CD4-positive, alpha-beta T cell (primary cell): ENCODE measurements at regions of chr1 and their contacts with region 1.

Region 1: DNA sequence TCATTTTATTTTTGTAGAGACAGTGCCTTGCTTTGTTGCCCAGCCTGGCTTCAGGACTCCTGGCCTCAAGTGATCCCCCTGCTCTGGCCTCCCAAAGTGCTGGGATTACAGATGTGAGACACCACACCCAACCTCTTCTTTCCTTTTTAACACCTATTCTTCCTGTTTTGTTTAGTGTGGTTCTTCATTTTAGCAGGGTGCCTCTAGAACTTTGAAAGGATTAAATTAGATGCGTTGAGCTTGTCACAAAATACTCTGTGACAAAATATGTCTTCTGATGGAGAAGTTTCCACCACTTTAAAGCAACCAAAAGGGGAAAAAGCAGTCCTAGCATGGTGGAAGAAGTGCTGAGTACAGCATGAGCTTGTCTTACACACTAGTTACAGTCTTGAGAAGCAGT is 42.0 kb downstream of the CDC14A start:
- DNase-seq: peak in 2 of 14 experiments; percentile 28 to 68
- ATAC-seq: no peak
- H3K4me3 ChIP-seq: no peak overlapping the region
- H3K4me3 Mint-ChIP-seq: peak overlapping the region; percentile 62
- H3K27ac ChIP-seq: peak overlapping the region; percentile 40 to 73
- H3K27ac Mint-ChIP-seq: peak overlapping the region; percentile 85
- H3K4me1 ChIP-seq: peaks cover 53% of the 10 kb centered on the region
- H3K4me1 Mint-ChIP-seq: peaks cover 99% of the 10 kb centered on the region
- H3K27me3 ChIP-seq: no peaks in the 10 kb centered on the region
- H3K27me3 Mint-ChIP-seq: no peaks in the 10 kb centered on the region
- CTCF ChIP-seq: no peak

Region 2: GRCh38 chr1:100134872-100135271 is 259.4 kb before region 1 on chr1:
- CTCF ChIA-PET with region 1: no interaction called
- POLR2A ChIA-PET with region 1: no interaction called
- intact Hi-C with region 1: no loop called
- DNase-seq: no peak
- ATAC-seq: no peak
- H3K4me3 ChIP-seq: no peak overlapping the region
- H3K4me3 Mint-ChIP-seq: peak overlapping the region; percentile 81
- H3K27ac ChIP-seq: no peak overlapping the region
- H3K27ac Mint-ChIP-seq: no peak overlapping the region
- H3K4me1 ChIP-seq: peaks cover 12% of the 10 kb centered on the region
- H3K4me1 Mint-ChIP-seq: peaks cover 47% of the 10 kb centered on the region
- H3K27me3 ChIP-seq: no peaks in the 10 kb centered on the region
- H3K27me3 Mint-ChIP-seq: no peaks in the 10 kb centered on the region
- CTCF ChIP-seq: no peak

Region 3: DNA sequence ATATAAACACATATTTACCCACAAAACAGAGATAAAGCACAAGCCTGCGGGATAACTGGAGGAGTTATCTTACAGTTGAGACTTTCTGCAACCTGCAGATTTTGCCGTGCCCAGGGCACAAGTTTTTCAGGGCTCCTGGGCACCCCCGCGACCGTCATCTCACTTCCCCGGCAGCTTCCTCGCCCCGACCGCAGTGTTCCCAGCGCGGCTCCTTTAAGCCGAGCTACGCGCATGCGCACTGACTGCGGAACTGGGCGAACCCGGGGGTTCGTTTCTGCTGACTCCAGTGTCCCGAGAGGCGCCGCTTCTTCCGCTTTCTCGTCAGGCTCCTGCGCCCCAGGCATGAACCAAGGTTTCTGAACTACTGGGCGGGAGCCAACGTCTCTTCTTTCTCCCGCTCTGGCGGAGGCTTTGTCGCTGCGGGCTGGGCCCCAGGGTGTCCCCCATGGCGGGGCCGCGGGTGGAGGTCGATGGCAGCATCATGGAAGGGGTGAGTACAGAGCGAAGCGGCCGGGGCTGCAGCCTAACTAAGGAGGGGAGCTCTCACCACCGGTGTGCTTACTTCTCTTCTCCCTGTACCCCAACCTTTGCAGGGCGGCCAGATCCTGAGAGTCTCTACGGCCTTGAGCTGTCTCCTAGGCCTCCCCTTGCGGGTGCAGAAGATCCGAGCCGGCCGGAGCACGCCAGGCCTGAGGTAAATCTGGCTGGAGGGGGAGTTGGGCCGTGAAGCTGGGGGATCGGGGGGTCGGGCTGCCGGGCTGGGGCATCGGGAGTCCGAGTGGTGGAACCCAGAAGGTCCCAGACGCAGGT is 128.1 kb before region 1 on chr1 and contains the start of gene RTCA:
- CTCF ChIA-PET with region 1: no interaction called
- POLR2A ChIA-PET with region 1: interaction called, 12 read pairs
- intact Hi-C with region 1: no loop called
- DNase-seq: peak; percentile 88 to 98 (median 94)
- ATAC-seq: peak; percentile 95
- H3K4me3 ChIP-seq: peak within 1 kb of the TSS; percentile 96
- H3K4me3 Mint-ChIP-seq: peak within 1 kb of the TSS; percentile 99
- H3K27ac ChIP-seq: peak within 1 kb of the TSS; percentile 62 to 67
- H3K27ac Mint-ChIP-seq: peak within 1 kb of the TSS; percentile 93
- H3K4me1 ChIP-seq: peaks cover 41% of the 10 kb centered on the region
- H3K4me1 Mint-ChIP-seq: peaks cover 60% of the 10 kb centered on the region
- H3K27me3 ChIP-seq: no peaks in the 10 kb centered on the region
- H3K27me3 Mint-ChIP-seq: no peaks in the 10 kb centered on the region
- CTCF ChIP-seq: no peak
- total RNA-seq, gene RTCA: 62.1 to 67.1 TPM

Region 4: GRCh38 chr1:100414693-100415497 is 20.6 kb after region 1 on chr1:
- CTCF ChIA-PET with region 1: interaction called, 11 read pairs
- POLR2A ChIA-PET with region 1: interaction called, 23 read pairs
- intact Hi-C with region 1: loop called in 1 of 2 experiments (anchors 2 kb)
- DNase-seq: peak in 3 of 14 experiments; percentile 54 to 81 (median 56)
- ATAC-seq: peak; percentile 82
- H3K4me3 ChIP-seq: no peak overlapping the region
- H3K4me3 Mint-ChIP-seq: peak overlapping the region; percentile 74
- H3K27ac ChIP-seq: peak overlapping the region; percentile 3 to 59
- H3K27ac Mint-ChIP-seq: peak overlapping the region; percentile 86
- H3K4me1 ChIP-seq: peaks cover 63% of the 10 kb centered on the region
- H3K4me1 Mint-ChIP-seq: peaks cover 88% of the 10 kb centered on the region
- H3K27me3 ChIP-seq: no peaks in the 10 kb centered on the region
- H3K27me3 Mint-ChIP-seq: no peaks in the 10 kb centered on the region
- CTCF ChIP-seq: no peak

Region 5: DNA sequence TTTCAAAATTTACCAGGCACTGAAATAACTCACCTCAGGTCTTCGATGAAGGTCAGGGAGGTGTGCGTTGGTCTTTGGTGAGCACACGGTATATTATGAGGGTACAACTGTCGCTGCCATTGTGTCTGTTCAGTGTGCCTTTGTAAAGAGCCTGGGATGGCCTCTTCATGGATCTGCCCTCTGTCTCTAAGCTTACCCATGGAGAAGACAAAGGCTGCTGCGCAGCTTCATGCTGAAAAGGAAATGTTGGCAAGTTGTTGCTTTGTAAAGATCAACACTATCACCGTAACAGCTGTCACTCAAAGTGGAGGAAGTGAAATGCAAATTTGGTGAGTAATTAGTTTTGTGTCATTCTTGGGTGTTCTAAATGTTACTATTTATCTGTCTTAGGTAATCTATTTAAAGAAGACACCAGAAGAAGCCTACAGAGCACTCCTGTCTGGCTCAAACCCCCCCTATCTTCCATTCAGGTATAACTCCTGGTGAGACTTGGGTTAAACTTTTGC is 29.6 kb after region 1 on chr1:
- CTCF ChIA-PET with region 1: interaction called, 12 read pairs
- POLR2A ChIA-PET with region 1: interaction called, 35 read pairs
- intact Hi-C with region 1: no loop called
- DNase-seq: peak in 9 of 14 experiments; percentile 11 to 85 (median 33)
- ATAC-seq: peak; percentile 74
- H3K4me3 ChIP-seq: peak overlapping the region; percentile 51
- H3K4me3 Mint-ChIP-seq: peak overlapping the region; percentile 91
- H3K27ac ChIP-seq: peak overlapping the region; percentile 49 to 54
- H3K27ac Mint-ChIP-seq: peak overlapping the region; percentile 94
- H3K4me1 ChIP-seq: peaks cover 34% of the 10 kb centered on the region
- H3K4me1 Mint-ChIP-seq: peaks cover 84% of the 10 kb centered on the region
- H3K27me3 ChIP-seq: no peaks in the 10 kb centered on the region
- H3K27me3 Mint-ChIP-seq: no peaks in the 10 kb centered on the region
- CTCF ChIP-seq: peak; percentile 14